Stomach (tissue), 19 donors: ENCODE measurements at regions of chr17 and their contacts with region 1.

Region 1: GRCh38 chr17:65794572-65794971 is 233.1 kb upstream of the AXIN2 start:
- DNase-seq: peak; percentile 38 to 45
- H3K4me3 ChIP-seq: no peak overlapping the region
- H3K27ac ChIP-seq: no peak overlapping the region
- H3K4me1 ChIP-seq: no peaks in the 10 kb centered on the region
- H3K27me3 ChIP-seq: no peaks in the 10 kb centered on the region
- CTCF ChIP-seq: peak in 5 of 7 experiments; percentile 35 to 72 (median 63)
- EP300 ChIP-seq: no peak
- POLR2A ChIP-seq: no peak

Region 2: DNA sequence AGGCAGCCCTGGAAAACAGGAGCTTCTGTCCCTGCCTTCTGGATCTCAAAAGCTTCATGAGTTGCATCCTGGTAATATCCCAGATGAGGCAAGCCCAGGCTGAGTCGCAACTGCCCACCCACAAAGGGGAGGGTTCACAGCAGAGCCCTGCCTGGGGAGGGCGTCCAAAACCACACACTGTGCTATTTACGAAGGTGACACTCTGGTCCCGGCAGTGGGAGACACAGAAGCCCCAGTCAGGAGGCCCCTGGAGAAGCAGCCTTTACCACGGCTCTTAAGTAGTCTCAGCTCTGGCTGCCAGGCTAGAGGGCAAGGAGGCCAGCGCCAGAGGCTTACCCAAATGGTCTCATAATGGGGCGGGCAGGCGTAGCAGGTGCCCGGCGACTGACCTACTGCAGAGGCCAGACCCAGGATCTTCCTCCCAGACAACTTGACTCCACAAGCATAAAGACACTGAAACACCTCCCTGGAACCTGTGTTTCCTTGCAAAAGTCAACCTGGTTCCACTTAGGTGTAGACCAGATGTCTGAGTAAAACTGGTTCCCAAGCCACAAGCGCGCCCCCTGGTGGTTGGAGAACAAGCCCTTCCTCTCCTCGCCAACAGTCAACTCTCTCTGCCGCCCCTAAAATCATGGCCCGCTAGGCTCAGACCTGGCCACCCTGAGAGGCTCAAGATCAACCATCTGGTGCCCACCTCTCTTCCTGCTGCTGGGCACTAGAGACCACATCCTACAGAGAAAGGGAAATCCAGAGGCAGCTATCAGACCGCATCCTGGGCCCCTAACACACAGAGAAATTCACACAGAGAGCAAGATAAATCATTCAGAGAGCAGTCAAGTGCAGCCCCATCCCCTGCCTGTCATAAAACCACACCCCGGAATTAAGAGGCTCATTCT is 238.3 kb before region 1 on chr17:
- intact Hi-C with region 1: loop called (anchors 10 kb)
- DNase-seq: peak; percentile 89 to 92
- H3K4me3 ChIP-seq: peak overlapping the region in 2 of 4 donors; percentile 17 to 95
- H3K27ac ChIP-seq: peak overlapping the region in 2 of 5 donors; percentile 52 to 56
- H3K4me1 ChIP-seq: peaks cover 0 to 30% (median 9%) of the 10 kb centered on the region in 4 donors
- H3K27me3 ChIP-seq: peaks cover 0 to 25% (median 0%) of the 10 kb centered on the region in 3 donors
- CTCF ChIP-seq: peak in 5 of 7 experiments; percentile 68 to 87 (median 86)
- EP300 ChIP-seq: no peak
- POLR2A ChIP-seq: no peak